ENCODE measurements at regions of chr10 and their contacts with region 1.

Region 1: GRCh38 chr10:5873515-5873995 is 16.1 kb downstream of the ANKRD16 start:
- DNase-seq: peak; percentile 85
- H3K4me3 Mint-ChIP-seq: peak overlapping the region; percentile 44
- H3K27ac Mint-ChIP-seq: no peak overlapping the region
- H3K4me1 Mint-ChIP-seq: peaks cover 3% of the 10 kb centered on the region
- H3K27me3 Mint-ChIP-seq: no peaks in the 10 kb centered on the region

Region 2: GRCh38 chr10:5043716-5044115 is 829.8 kb before region 1 on chr10:
- CTCF ChIA-PET with region 1: no interaction called
- intact Hi-C with region 1: no loop called
- DNase-seq: no peak
- H3K4me3 Mint-ChIP-seq: no peak overlapping the region
- H3K27ac Mint-ChIP-seq: no peak overlapping the region
- H3K4me1 Mint-ChIP-seq: no peaks in the 10 kb centered on the region
- H3K27me3 Mint-ChIP-seq: no peaks in the 10 kb centered on the region

Region 3: GRCh38 chr10:5889624-5890451 is 16.3 kb after region 1 on chr10 and contains the starts of genes ANKRD16 and FBH1:
- CTCF ChIA-PET with region 1: interaction called, 16 read pairs
- intact Hi-C with region 1: no loop called
- DNase-seq: peak; percentile 97
- H3K4me3 Mint-ChIP-seq: peak within 1 kb of the TSS; percentile 92
- H3K27ac Mint-ChIP-seq: peak within 1 kb of the TSS; percentile 74
- H3K4me1 Mint-ChIP-seq: peaks cover 55% of the 10 kb centered on the region
- H3K27me3 Mint-ChIP-seq: no peaks in the 10 kb centered on the region
- total RNA-seq, gene ANKRD16: 3.6 to 3.9 TPM
- total RNA-seq, gene FBH1: 40.4 to 42.7 TPM

Measured in activated naive CD4-positive, alpha-beta T cell treated with anti-CD3 and anti-CD28 coated beads for 36 hours (primary cell).